ENCODE measurements at regions of chr7 and their contacts with region 1.

Region 1: DNA sequence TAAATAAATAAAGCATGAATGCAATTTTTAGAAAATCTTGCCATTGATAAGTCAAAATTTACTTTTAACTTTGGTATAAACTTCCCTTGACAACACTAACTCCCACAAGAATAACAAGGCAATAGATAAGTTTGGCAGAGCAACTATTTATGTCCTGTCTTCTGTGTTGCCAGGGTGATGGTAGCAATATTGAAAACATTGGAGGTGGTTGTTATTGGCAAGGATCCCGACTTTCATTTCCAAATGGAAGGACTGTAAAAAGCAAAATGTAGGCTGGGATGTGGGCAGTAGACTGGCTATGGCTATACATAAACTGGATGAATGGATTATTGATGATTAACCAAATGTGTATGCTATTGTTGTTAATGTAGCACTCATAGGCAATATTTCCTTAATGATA is 134.9 kb upstream of the CACNA2D1 start:
- DNase-seq: no peak
- H3K4me3 ChIP-seq: no peak overlapping the region
- H3K27ac ChIP-seq: no peak overlapping the region
- H3K4me1 ChIP-seq: no peaks in the 10 kb centered on the region
- H3K27me3 ChIP-seq: no peaks in the 10 kb centered on the region
- CTCF ChIP-seq: no peak

Region 2: GRCh38 chr7:82028097-82028496 is 550.3 kb before region 1 on chr7:
- CTCF ChIA-PET with region 1: no interaction called
- POLR2A ChIA-PET with region 1: interaction called, 14 read pairs
- intact Hi-C with region 1: no loop called
- DNase-seq: no peak
- H3K4me3 ChIP-seq: no peak overlapping the region
- H3K27ac ChIP-seq: no peak overlapping the region
- H3K4me1 ChIP-seq: no peaks in the 10 kb centered on the region
- H3K27me3 ChIP-seq: no peaks in the 10 kb centered on the region
- CTCF ChIP-seq: no peak

Region 3: GRCh38 chr7:82204694-82205093 is 373.7 kb before region 1 on chr7:
- CTCF ChIA-PET with region 1: no interaction called
- POLR2A ChIA-PET with region 1: no interaction called
- intact Hi-C with region 1: no loop called
- DNase-seq: no peak
- H3K4me3 ChIP-seq: no peak overlapping the region
- H3K27ac ChIP-seq: no peak overlapping the region
- H3K4me1 ChIP-seq: peaks cover 6% of the 10 kb centered on the region
- H3K27me3 ChIP-seq: no peaks in the 10 kb centered on the region
- CTCF ChIP-seq: no peak

Region 4: DNA sequence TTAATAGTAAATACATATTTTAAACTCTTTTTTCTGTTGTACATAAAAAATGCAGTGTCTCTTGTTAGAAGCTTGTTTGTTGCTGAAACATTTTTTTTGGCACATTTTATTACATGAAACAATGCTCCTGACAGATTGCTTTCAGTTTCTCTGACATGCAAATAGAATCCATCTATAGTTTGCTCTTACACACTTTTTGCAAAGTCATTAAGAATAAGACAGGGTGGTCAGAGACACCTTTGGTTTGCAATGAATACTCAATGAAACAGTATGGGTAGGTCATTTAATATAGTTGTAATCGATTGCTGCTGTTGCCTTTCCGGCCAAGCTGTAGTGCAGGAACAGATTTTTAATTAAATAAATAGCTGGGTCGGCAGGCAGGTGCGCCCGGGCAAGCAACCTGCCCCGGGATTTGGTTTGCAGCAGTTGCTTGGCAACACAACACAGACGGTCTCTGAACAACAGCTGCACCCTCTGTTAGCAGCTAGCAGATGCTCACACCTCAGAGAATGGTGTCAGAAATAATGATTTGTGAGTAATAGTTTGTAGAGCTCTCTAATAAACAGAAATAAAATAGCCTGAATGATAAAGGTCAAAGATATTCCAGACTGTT is 19.1 kb before region 1 on chr7:
- CTCF ChIA-PET with region 1: no interaction called
- POLR2A ChIA-PET with region 1: no interaction called
- intact Hi-C with region 1: no loop called
- DNase-seq: no peak
- H3K4me3 ChIP-seq: no peak overlapping the region
- H3K27ac ChIP-seq: no peak overlapping the region
- H3K4me1 ChIP-seq: no peaks in the 10 kb centered on the region
- H3K27me3 ChIP-seq: no peaks in the 10 kb centered on the region
- CTCF ChIP-seq: no peak

Measured in A673 (cell line).